ENCODE measurements at regions of chr17 and their contacts with region 1.

Region 1: GRCh38 chr17:35432176-35433074 is at the start of gene SLFN12:
- DNase-seq: peak; percentile 81
- H3K4me3 Mint-ChIP-seq: peak within 1 kb of the TSS; percentile 88
- H3K27ac Mint-ChIP-seq: peak within 1 kb of the TSS; percentile 92
- H3K4me1 Mint-ChIP-seq: peaks cover 51% of the 10 kb centered on the region
- H3K27me3 Mint-ChIP-seq: no peaks in the 10 kb centered on the region
- total RNA-seq, gene SLFN12: 5.0 and 7.8 TPM in 2 replicates

Region 2: GRCh38 chr17:35345926-35346771 is 86.3 kb before region 1 on chr17:
- intact Hi-C with region 1: no loop called
- DNase-seq: peak; percentile 84
- H3K4me3 Mint-ChIP-seq: peak overlapping the region; percentile 93
- H3K27ac Mint-ChIP-seq: peak overlapping the region; percentile 60
- H3K4me1 Mint-ChIP-seq: peaks cover 42% of the 10 kb centered on the region
- H3K27me3 Mint-ChIP-seq: peaks cover 18% of the 10 kb centered on the region

Region 3: GRCh38 chr17:35448214-35448898 is 15.9 kb after region 1 on chr17 and contains the start of gene SLFN13:
- intact Hi-C with region 1: loop called (anchors 1 kb)
- DNase-seq: peak; percentile 95
- H3K4me3 Mint-ChIP-seq: peak within 1 kb of the TSS; percentile 69
- H3K27ac Mint-ChIP-seq: peak within 1 kb of the TSS; percentile 77
- H3K4me1 Mint-ChIP-seq: peaks cover 13% of the 10 kb centered on the region
- H3K27me3 Mint-ChIP-seq: no peaks in the 10 kb centered on the region
- total RNA-seq, gene SLFN13: 34.5 and 36.8 TPM in 2 replicates

Measured in activated CD4-positive, alpha-beta T cell treated with anti-CD3 and anti-CD28 coated beads, Interleukin-2, amount 10 ng/mL, durations not matched to agents 24 days and 14 days (primary cell).